ENCODE measurements at regions of chr5 and their contacts with region 1.

Region 1: GRCh38 chr5:128213340-128213739 is 129.8 kb downstream of the SLC12A2 start:
- DNase-seq: no peak
- H3K4me3 ChIP-seq: no peak overlapping the region
- CTCF ChIP-seq: peak; percentile 67

Region 2: DNA sequence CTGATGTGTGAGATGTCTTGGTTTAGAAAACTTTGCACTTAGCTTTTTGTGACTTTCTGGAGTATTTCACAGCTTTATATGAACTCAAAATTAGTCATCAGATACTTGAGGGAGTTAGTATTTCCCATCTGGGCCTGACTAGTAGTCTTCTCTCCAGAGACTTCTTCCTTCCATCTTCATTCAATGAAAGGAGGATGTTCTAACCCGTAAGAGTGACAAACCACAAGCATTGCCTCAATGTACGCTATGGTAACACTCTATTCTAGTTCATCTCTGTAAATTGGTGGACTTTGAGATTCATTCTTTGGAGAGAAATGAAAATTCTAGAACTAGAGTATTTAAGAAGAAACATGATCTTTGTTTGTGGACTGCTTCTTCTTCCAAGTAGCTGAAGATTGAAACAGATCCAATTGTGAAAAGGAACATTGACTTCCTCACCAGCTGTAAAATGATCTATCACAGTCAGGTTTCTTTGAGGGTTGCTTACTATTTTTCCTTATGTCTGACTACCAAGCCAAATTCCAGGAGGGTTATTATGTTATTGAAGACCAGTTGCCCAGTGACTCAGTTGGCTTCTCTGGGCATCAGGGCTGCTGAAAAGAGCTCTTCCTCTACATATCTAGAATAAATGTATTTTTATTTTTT is 27.8 kb after region 1 on chr5:
- CTCF ChIA-PET with region 1: interaction called, 20 read pairs
- POLR2A ChIA-PET with region 1: no interaction called
- DNase-seq: no peak
- H3K4me3 ChIP-seq: no peak overlapping the region
- CTCF ChIP-seq: no peak

Region 3: GRCh38 chr5:128252756-128253155 is 39.4 kb after region 1 on chr5:
- CTCF ChIA-PET with region 1: interaction called, 24 read pairs
- POLR2A ChIA-PET with region 1: no interaction called
- DNase-seq: no peak
- H3K4me3 ChIP-seq: no peak overlapping the region
- CTCF ChIP-seq: no peak